Endothelial cell of umbilical vein (primary cell): ENCODE measurements at regions of chr1 and their contacts with region 1.

Region 1: GRCh38 chr1:85707990-85708828 is at the start of gene ZNHIT6:
- DNase-seq: peak; percentile 95
- H3K4me3 ChIP-seq: peak within 1 kb of the TSS; percentile 43 to 82 (median 69)
- H3K27ac ChIP-seq: peak within 1 kb of the TSS; percentile 41
- H3K4me1 ChIP-seq: peaks cover 13% of the 10 kb centered on the region
- H3K27me3 ChIP-seq: no peaks in the 10 kb centered on the region
- CTCF ChIP-seq: peak; percentile 17 to 42
- POLR2A ChIP-seq: peak; percentile 60
- total RNA-seq, gene ZNHIT6: 18.8 and 21.4 TPM in 2 replicates

Region 2: GRCh38 chr1:85200870-85201339 is 507.3 kb before region 1 on chr1 and contains the start of gene SYDE2:
- CTCF ChIA-PET with region 1: interaction called, 3 read pairs
- POLR2A ChIA-PET with region 1: no interaction called
- dilution Hi-C with region 1: no loop called
- intact Hi-C with region 1: loop called (anchors 5 kb)
- DNase-seq: peak; percentile 72
- H3K4me3 ChIP-seq: peak within 1 kb of the TSS; percentile 11 to 66 (median 64)
- H3K27ac ChIP-seq: peak within 1 kb of the TSS; percentile 69
- H3K4me1 ChIP-seq: peaks cover 16% of the 10 kb centered on the region
- H3K27me3 ChIP-seq: peaks cover 0 to 2% of the 10 kb centered on the region in 2 experiments
- CTCF ChIP-seq: no peak
- POLR2A ChIP-seq: peak; percentile 69
- total RNA-seq, gene SYDE2: 2.9 and 3.1 TPM in 2 replicates

Region 3: DNA sequence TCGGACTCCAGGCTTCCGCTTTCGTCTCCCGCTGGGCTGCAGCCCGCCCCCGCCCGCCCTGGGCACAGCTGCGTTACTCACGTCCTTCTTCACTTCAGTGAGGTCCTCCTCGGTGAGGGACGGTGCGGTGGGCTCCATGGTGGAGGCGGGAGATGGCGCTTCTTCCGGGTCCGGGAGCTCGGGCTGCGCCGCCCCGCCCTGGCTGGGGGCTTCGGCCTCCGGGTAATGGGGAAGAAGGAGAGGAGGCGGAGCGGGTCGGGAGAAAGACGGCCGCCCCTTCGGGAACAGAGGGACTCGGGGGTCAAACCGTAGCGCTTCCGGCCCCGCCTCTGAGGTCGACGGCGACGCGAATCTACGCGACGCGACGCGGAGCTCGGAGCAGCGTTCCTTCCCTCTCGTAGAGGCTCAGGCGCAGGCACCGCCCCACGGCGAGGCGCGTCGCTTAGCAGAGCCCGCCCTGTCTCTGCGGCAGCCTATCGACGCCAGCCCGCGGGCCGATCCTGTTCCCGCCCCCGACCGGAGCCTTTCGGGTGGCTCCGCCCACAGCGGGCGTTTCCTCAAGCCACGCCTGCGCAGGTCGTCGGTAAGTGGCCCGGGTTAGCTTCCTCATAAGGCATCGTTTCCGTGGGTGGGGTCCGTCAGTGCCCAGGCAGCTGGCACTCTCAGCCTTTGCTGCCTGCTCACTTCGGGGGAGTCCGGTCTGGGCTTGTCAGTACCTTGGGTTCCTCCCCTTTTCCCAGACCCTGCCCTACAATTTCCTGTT is 431.8 kb before region 1 on chr1 and contains the start of gene BCL10:
- CTCF ChIA-PET with region 1: interaction called, 4 read pairs
- POLR2A ChIA-PET with region 1: interaction called, 3 read pairs
- dilution Hi-C with region 1: no loop called
- intact Hi-C with region 1: loop called (anchors 1 kb)
- DNase-seq: peak; percentile 99
- H3K4me3 ChIP-seq: peak within 1 kb of the TSS; percentile 95 to 99 (median 98)
- H3K27ac ChIP-seq: peak within 1 kb of the TSS; percentile 100
- H3K4me1 ChIP-seq: peaks cover 56% of the 10 kb centered on the region
- H3K27me3 ChIP-seq: no peaks in the 10 kb centered on the region
- CTCF ChIP-seq: no peak
- POLR2A ChIP-seq: peak; percentile 64
- total RNA-seq, gene BCL10: 74.5 and 78.6 TPM in 2 replicates

Region 4: DNA sequence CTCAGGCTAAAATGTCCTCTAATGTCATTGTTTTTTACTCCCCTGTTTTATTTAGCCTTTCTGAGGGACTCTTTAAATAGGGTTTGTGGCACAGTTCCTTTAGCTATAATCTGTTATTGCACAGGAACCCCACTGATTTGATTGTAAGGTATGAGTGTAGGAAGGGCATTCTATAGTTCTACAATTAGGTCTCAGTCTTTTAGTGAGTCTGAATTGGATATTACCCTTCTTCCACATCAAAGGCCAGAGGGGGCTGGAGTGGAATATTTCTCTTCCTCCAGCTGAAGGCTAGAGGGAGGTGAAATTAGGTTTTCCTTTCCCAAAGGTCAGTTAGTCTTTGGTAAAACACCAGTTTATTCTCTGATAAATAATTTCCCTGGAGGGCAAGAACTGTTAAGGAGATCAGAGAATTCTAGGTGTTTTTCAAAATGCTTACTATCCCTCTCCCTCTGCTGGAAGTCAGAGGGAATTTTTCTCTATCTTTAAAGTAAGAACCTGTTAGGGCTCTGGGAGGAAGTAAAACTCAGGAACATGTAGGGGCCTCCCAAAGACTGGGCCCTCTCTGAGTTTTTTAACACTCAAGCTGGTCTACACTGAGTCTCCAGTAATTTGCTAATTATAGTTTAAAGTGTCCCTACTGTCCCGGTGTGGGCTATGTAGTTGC is 176.3 kb after region 1 on chr1:
- CTCF ChIA-PET with region 1: no interaction called
- POLR2A ChIA-PET with region 1: no interaction called
- dilution Hi-C with region 1: no loop called
- intact Hi-C with region 1: loop called (anchors 1 kb)
- DNase-seq: peak; percentile 31
- H3K4me3 ChIP-seq: no peak overlapping the region
- H3K27ac ChIP-seq: no peak overlapping the region
- H3K4me1 ChIP-seq: no peaks in the 10 kb centered on the region
- H3K27me3 ChIP-seq: peaks cover 6 to 23% of the 10 kb centered on the region in 2 experiments
- CTCF ChIP-seq: peak in 1 of 2 donors; percentile 32
- POLR2A ChIP-seq: no peak